A549 (cell line): ENCODE measurements at regions of chr1 and their contacts with region 1.

Region 1: DNA sequence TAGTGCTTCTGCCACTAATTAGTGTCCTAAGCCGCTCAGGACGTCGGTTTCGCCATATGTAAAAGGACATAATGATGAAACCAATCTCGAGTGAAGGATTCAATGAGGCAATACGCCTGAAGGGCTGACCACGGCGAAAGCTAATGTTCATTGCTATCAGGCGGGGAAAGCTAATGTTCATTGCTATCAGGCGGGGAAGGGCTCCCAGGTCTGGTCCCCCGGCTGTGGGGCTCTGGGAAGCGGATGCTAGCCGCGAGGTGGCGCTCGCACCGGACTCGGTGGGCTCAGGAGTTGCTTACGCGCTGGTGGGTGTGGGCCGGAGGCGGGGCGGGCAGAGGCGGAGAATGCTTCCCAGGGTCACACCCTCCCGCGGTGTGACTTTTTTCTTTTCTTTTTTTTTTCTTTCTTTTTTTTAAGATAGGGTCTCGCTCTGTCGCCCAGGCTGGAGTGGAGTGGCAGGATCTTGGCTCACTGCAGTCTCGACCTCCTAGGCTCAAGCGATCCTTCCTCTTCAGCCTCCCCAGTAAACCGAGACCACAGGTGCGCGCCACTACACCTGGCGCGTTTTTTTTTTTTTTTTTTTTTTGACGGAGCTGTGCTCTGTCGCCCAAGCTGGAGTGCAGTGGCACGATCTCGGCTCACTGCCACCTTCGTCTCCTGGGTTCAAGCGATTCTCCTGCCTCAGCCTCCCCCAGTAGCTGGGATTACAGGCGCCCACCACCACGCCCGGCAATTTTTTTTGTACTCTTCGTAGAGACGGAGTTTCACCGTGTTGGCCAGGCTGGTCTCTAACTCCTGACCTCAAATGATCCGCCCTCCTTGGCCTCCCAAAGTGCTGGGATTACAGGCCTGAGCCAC is 1.1 kb upstream of the PEAR1 start:
- DNase-seq: peak; percentile 89
- ATAC-seq: peak; percentile 65 to 86
- H3K4me3 ChIP-seq: peak overlapping the region; percentile 19; the same call in 2 of the 3 replicates
- H3K27ac ChIP-seq: peak overlapping the region; percentile 61 to 93; a peak in 5 of 6 replicates
- H3K4me1 ChIP-seq: peaks cover 40% of the 10 kb centered on the region
- CTCF ChIP-seq: peak; percentile 93
- EP300 ChIP-seq: no peak
- POLR2A ChIP-seq: no peak
- RAD21 ChIP-seq: peak; percentile 69 to 83

Region 2: GRCh38 chr1:156804572-156805243 is 87.7 kb before region 1 on chr1:
- CTCF ChIA-PET with region 1: interaction called, 125 read pairs
- POLR2A ChIA-PET with region 1: no interaction called
- DNase-seq: no peak
- ATAC-seq: 0 out of 6 replicates have a peak, but pooled peaks of 1 of the 2 experiments have one; percentile 4
- H3K4me3 ChIP-seq: no peak overlapping the region
- H3K27ac ChIP-seq: no peak overlapping the region
- H3K4me1 ChIP-seq: no peaks in the 10 kb centered on the region
- CTCF ChIP-seq: no peak
- EP300 ChIP-seq: no peak
- POLR2A ChIP-seq: no peak
- RAD21 ChIP-seq: no peak

Region 3: GRCh38 chr1:156838981-156839410 is 53.4 kb before region 1 on chr1:
- CTCF ChIA-PET with region 1: interaction called, 239 read pairs
- POLR2A ChIA-PET with region 1: no interaction called
- DNase-seq: peak in 1 of 2 experiments; percentile 72
- ATAC-seq: peak; percentile 60 to 85; a peak in 5 of 6 replicates
- H3K4me3 ChIP-seq: no peak overlapping the region
- H3K27ac ChIP-seq: no peak overlapping the region
- H3K4me1 ChIP-seq: no peaks in the 10 kb centered on the region
- CTCF ChIP-seq: peak; percentile 81
- EP300 ChIP-seq: no peak
- POLR2A ChIP-seq: no peak
- RAD21 ChIP-seq: peak; percentile 83 to 87

Region 4: GRCh38 chr1:156910309-156910782 is 17.9 kb after region 1 on chr1:
- CTCF ChIA-PET with region 1: interaction called, 102 read pairs
- POLR2A ChIA-PET with region 1: interaction called, 4 read pairs
- DNase-seq: peak; percentile 43 to 66
- ATAC-seq: peak; percentile 52 to 78; a peak in 4 of 6 replicates
- H3K4me3 ChIP-seq: no peak overlapping the region
- H3K27ac ChIP-seq: peak overlapping the region in 1 of 2 experiments; percentile 52; a peak in 2 of 6 replicates
- H3K4me1 ChIP-seq: peaks cover 20% of the 10 kb centered on the region
- CTCF ChIP-seq: peak; percentile 83
- EP300 ChIP-seq: no peak
- POLR2A ChIP-seq: no peak
- RAD21 ChIP-seq: peak; percentile 37 to 50; a peak in 4 of 5 replicates

Region 5: DNA sequence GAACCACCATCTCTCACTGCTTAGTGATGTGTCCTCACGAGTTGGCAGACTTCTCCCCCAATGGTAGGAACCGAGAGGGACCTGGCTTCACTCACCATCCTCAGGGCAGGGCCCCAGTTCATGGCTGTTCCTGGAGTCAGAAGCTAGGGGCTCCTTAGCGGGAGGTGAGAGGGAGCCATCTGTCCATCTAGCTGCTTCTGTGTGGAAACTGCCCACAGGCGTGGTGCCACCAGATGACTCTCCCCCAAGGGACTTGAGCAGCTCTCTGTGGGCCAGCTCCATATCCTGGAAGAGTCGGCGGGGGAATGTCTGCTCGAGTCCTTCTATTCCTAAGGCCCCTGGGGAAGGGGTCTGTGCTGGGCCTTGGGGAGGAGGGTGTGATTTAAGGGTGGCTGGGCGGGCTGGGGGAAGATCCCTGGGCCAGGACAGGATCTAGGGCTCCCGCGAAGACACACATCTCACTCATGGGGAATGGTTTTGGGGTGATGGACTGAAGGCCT is 44.4 kb after region 1 on chr1:
- CTCF ChIA-PET with region 1: interaction called, 26 read pairs
- POLR2A ChIA-PET with region 1: no interaction called
- DNase-seq: no peak
- ATAC-seq: no peak
- H3K4me3 ChIP-seq: no peak overlapping the region
- H3K27ac ChIP-seq: no peak overlapping the region
- H3K4me1 ChIP-seq: no peaks in the 10 kb centered on the region
- CTCF ChIP-seq: no peak
- EP300 ChIP-seq: no peak
- POLR2A ChIP-seq: no peak
- RAD21 ChIP-seq: no peak